ACHN (cell line): ENCODE measurements at regions of chr11 and their contacts with region 1.

Region 1: GRCh38 chr11:9015677-9016076 is 11.9 kb upstream of the NRIP3 start:
- DNase-seq: peak; percentile 72

Region 2: DNA sequence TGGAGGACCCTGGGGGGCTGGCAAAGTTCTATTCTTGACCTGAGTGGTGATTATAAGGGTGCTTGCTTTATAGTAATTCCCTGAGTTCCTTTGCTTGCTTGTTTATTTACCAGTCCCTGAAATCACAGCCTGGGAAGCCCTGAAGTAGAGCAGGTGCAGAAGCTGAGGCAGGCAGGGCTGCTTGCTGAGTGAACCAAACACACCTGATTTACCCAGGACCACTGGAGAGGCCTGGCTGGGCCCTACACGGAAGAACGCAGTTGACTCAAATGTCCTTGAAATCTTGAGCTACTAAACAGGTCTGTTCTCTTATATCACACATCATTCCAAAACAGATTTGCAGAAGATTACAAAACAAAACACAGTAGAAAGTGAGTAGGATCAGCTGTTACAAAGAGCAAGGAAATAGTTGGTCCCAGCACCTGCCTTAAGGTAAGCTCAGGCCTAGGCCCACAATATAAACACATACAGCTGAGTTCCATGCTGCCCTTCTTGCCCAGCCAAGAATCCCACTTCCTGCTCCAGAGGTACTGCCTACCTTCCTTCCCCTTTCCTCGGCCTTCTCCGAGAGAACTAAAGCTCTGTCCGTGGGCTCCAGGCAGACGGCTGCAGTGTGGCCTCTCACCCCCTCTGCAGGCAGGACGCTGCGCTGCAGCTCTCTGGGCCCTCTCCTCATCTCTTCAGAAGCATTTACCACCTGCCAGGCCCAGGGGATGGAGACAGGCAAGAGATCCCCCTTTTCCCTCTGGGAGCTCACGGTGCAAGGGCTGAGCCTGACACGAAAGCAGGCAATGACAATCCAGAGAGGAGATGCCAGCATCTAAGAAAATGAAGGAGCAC is 121.8 kb after region 1 on chr11:
- in situ Hi-C with region 1: loop called (anchors 25 kb)
- DNase-seq: peak; percentile 73